CD8-positive, alpha-beta memory T cell (primary cell): ENCODE measurements at regions of chr17 and their contacts with region 1.

Region 1: DNA sequence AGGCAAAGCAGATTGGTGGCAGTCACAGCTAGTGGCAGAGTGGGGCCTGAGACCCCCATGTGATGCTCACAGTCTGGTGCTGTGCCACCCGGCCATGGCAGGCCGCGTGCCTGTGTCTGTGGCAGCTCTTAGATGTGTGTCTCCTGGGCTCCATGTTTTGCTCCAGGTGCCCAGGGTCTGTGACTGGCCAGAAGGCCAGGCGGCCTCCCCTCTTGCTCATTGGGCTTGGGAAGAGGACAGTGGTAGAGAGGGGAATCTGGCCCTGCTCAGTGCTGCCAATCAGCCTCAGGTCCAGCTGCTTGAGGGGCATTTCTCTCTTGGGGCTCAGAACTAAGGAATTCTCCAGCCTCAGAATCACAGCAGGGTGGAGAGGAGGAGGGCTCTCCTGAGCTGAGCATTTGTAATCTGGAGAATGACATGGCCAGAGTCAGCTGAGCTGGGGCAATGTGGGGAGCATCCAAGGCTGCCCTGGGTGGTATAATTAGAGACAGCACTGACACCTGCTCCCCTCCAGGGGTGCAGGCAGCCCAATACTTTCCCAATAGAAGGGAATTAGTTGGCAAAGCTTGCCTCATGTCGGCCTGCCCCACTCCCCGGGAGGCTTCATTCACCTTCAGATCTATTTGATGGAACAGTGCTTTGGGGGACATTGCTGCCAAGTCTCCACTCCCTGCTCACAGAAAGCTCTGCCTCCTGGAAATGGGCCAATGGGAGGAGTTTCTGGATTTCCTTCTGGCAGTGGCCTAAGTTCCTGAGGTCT is 2.7 kb upstream of the LASP1NB start:
- DNase-seq: no peak
- H3K4me3 ChIP-seq: no peak overlapping the region
- H3K4me3 Mint-ChIP-seq: no peak overlapping the region
- H3K27ac ChIP-seq: no peak overlapping the region
- H3K27ac Mint-ChIP-seq: peak overlapping the region in 3 of 8 donors; percentile 15 to 35 (median 30)
- H3K4me1 ChIP-seq: peaks cover 24% of the 10 kb centered on the region
- H3K4me1 Mint-ChIP-seq: peaks cover 35 to 48% (median 36%) of the 10 kb centered on the region in 3 donors
- H3K27me3 ChIP-seq: no peaks in the 10 kb centered on the region
- H3K27me3 Mint-ChIP-seq: peaks cover 0 to 2% of the 10 kb centered on the region in 2 donors

Region 2: GRCh38 chr17:38861399-38861843 is 61.3 kb before region 1 on chr17:
- CTCF ChIA-PET with region 1: no interaction called
- POLR2A ChIA-PET with region 1: no interaction called
- DNase-seq: no peak
- H3K4me3 ChIP-seq: no peak overlapping the region
- H3K4me3 Mint-ChIP-seq: peak overlapping the region in 1 of 7 donors; percentile 54
- H3K27ac ChIP-seq: no peak overlapping the region
- H3K27ac Mint-ChIP-seq: peak overlapping the region in 1 of 8 donors; percentile 58
- H3K4me1 ChIP-seq: no peaks in the 10 kb centered on the region
- H3K4me1 Mint-ChIP-seq: no peaks in the 10 kb centered on the region
- H3K27me3 ChIP-seq: no peaks in the 10 kb centered on the region
- H3K27me3 Mint-ChIP-seq: no peaks in the 10 kb centered on the region

Region 3: DNA sequence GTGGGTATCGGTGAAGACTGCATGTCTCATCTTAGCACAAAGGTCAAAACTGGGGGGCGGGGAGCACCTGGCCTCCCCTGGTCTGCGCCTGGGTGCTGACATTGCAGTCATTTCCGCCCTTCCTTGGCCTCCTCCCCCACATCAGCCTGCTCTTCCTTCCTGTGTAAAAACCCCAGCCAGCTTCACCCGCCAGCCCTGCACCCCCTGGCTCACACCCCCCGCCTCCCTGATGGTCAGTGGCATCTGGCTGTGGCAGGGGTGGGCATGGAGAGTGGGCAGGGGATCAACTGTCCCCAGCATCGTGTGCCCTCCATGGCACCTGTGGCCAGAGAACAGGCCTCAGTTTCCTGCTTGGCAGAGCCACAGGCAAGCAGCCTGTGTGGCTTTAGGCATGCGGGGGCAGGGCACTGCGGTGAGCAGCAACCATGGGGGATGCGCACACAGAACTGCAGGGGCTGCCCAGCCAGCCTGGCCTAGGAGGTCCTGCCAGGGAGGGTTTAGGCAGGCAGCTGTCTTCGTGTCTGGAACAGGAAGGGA is 23.8 kb before region 1 on chr17:
- CTCF ChIA-PET with region 1: interaction called, 35 read pairs
- POLR2A ChIA-PET with region 1: interaction called, 7 read pairs
- DNase-seq: peak; percentile 73 to 92 (median 84)
- H3K4me3 ChIP-seq: peak overlapping the region; percentile 60
- H3K4me3 Mint-ChIP-seq: peak overlapping the region; percentile 51 to 92 (median 77)
- H3K27ac ChIP-seq: peak overlapping the region; percentile 66
- H3K27ac Mint-ChIP-seq: peak overlapping the region; percentile 93 to 99 (median 96)
- H3K4me1 ChIP-seq: peaks cover 84% of the 10 kb centered on the region
- H3K4me1 Mint-ChIP-seq: peaks cover 72 to 81% (median 78%) of the 10 kb centered on the region in 3 donors
- H3K27me3 ChIP-seq: no peaks in the 10 kb centered on the region
- H3K27me3 Mint-ChIP-seq: no peaks in the 10 kb centered on the region

Region 4: GRCh38 chr17:39306509-39307212 is 383.9 kb after region 1 on chr17:
- CTCF ChIA-PET with region 1: no interaction called
- POLR2A ChIA-PET with region 1: no interaction called
- DNase-seq: no peak
- H3K4me3 ChIP-seq: no peak overlapping the region
- H3K4me3 Mint-ChIP-seq: no peak overlapping the region
- H3K27ac ChIP-seq: no peak overlapping the region
- H3K27ac Mint-ChIP-seq: peak overlapping the region in 1 of 8 donors; percentile 61
- H3K4me1 ChIP-seq: no peaks in the 10 kb centered on the region
- H3K4me1 Mint-ChIP-seq: no peaks in the 10 kb centered on the region
- H3K27me3 ChIP-seq: no peaks in the 10 kb centered on the region
- H3K27me3 Mint-ChIP-seq: no peaks in the 10 kb centered on the region